PC-3 (cell line): ENCODE measurements at regions of chr5 and their contacts with region 1.

Region 1: GRCh38 chr5:161966564-161966963 is 101.0 kb upstream of the GABRG2 start:
- DNase-seq: peak; percentile 51
- ATAC-seq: peak; percentile 31; the same call in 1 of the 2 replicates
- H3K4me3 ChIP-seq: no peak overlapping the region
- H3K27ac ChIP-seq: no peak overlapping the region
- H3K4me1 ChIP-seq: no peaks in the 10 kb centered on the region
- H3K27me3 ChIP-seq: no peaks in the 10 kb centered on the region
- CTCF ChIP-seq: peak; percentile 57

Region 2: DNA sequence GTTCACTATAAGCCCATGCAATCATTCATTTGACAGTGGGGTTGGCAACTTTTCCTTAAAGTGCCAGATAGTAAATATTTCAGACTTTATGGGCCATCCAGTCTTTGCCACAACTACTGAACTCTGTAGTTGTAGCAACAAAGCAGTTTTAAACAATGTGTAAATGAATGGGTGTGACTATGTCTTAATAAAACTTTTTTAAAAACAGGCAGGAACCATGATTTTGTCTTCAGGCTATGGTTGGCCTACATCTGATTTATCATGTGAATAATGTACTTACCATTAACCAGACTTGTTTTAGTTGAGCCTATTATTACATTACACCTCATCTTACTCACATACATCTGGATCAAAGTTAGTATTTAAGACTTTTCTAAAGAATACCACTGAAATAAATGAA is 462.6 kb after region 1 on chr5:
- CTCF ChIA-PET with region 1: interaction called, 12 read pairs
- POLR2A ChIA-PET with region 1: no interaction called
- intact Hi-C with region 1: no loop called
- DNase-seq: no peak
- ATAC-seq: no peak
- H3K4me3 ChIP-seq: no peak overlapping the region
- H3K27ac ChIP-seq: no peak overlapping the region
- H3K4me1 ChIP-seq: no peaks in the 10 kb centered on the region
- H3K27me3 ChIP-seq: no peaks in the 10 kb centered on the region
- CTCF ChIP-seq: no peak